ENCODE measurements at regions of chr12 and their contacts with region 1.

Region 1: DNA sequence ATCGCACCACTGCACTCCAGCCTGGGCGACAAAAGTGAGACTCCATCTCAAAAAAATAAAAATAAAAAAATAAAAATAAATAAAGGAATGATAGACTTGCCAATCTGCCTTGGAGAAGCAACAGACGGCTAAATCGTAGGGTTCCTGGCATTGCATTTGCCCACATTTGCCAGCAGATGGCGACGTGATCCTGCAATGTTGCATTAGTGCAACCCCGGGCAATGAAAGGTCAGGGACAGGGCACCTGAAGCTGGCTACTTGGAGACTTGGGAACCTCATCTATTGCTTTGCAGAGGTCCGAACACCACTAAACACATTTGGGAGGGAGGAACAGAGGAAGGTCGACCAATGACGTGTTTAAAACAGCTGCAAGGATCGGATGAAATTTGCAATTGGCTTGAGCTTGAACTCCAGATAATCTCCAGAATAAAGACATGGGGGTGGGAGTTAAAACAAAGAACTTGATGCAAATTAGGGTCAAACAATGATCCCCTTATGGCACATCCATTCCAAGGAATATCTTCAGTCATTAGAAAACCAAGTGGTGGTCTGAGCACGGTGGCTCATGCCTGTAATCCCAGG is 34.6 kb downstream of the SPRING1 start:
- DNase-seq: no peak
- ATAC-seq: peak; percentile 72

Region 2: GRCh38 chr12:116773276-116773731 is 70.0 kb after region 1 on chr12:
- intact Hi-C with region 1: no loop called
- DNase-seq: no peak
- ATAC-seq: no peak

Region 3: GRCh38 chr12:116880817-116881324 is 177.6 kb after region 1 on chr12:
- intact Hi-C with region 1: loop called (anchors 5 kb)
- DNase-seq: no peak
- ATAC-seq: peak; percentile 81

Region 4: DNA sequence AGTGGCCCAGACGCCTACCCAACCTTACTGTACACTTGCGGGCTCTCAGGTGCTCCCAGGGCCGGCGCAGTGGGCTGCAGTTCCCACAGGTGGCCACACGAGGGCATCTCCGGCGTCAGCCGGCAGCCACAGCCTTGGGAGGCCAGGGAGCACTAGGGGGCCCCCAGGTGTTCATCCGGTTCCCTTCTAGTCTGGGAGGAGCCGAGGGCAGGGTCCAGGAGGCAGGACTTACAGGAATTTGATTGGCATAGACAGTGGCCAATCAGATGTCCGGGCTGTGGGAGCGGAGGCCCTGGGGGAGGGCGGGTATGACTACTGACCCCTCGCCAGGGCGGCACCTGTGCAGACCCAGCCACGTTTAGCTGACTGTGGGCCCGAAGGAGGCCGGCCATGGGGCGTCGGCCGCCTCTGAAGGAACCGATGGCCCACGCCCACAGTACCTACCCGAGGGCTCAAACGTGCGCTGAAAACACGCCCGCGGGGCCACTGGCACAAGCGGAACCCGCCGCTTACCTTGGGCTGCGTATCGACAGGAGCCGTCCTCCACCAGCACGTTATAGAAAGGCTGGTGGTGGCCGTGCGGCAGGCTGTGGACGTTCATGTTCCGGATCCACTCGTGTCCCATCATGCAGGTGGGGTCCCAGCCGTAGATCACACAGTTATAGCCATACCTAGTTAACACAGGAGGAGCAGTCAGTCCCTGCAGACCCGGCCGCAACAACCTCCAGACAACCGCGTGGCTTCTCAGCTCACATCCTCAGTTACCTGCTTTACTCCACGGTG is 452.2 kb after region 1 on chr12:
- intact Hi-C with region 1: loop called (anchors 10 kb)
- DNase-seq: no peak
- ATAC-seq: peak; percentile 37